Right cardiac atrium (tissue), 5 donors: ENCODE measurements at regions of chr1 and their contacts with region 1.

Region 1: DNA sequence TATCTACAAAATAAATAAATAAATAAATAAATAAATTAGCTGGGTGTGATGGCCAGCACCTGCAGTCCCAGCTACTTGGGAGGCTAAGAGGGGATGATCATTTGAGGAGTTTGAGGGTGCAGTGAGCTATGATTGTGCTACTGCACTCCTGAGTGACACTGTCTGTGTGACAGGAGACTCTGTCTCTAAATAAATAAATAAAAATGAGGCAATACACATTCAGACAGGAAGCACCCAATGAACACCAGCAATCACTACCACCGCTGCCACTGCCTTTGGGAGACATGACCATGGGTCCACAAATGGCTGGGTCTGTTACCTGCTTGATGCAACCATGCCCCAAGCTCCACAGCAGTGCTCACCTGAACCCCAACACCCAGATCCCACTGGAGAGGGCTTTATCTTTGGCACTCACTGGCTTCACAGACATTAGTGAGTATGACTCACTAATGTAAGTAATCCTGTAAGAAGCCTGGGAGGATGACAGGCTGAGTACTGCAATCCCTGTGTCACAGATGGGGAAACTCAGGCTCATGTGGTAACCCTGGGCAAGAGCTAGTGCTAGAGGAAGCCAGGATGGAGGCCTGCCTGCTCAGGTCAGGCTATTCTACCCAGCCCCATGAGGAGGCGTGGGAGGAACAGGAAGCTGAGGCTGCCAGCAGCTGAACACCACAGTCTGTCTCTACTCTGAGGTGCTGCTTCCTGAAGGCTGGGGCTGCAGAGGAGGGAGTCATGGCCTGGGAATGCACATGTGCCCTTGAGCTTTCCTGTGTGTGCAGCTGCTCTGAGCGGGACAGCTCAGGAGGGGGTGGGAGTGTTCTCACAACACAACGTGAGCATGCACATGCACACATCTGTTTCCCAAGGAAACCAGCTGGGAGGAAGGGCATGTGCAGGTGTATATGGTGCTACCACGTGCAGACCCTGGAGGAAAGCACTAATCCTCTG is 43.0 kb downstream of the SLC9A1 start:
- DNase-seq: peak; percentile 81 to 90 (median 81)
- ATAC-seq: peak; percentile 83 to 92
- H3K4me3 ChIP-seq: no peak overlapping the region
- H3K27ac ChIP-seq: no peak overlapping the region
- H3K4me1 ChIP-seq: peaks cover 13% of the 10 kb centered on the region
- H3K27me3 ChIP-seq: no peaks in the 10 kb centered on the region

Region 2: DNA sequence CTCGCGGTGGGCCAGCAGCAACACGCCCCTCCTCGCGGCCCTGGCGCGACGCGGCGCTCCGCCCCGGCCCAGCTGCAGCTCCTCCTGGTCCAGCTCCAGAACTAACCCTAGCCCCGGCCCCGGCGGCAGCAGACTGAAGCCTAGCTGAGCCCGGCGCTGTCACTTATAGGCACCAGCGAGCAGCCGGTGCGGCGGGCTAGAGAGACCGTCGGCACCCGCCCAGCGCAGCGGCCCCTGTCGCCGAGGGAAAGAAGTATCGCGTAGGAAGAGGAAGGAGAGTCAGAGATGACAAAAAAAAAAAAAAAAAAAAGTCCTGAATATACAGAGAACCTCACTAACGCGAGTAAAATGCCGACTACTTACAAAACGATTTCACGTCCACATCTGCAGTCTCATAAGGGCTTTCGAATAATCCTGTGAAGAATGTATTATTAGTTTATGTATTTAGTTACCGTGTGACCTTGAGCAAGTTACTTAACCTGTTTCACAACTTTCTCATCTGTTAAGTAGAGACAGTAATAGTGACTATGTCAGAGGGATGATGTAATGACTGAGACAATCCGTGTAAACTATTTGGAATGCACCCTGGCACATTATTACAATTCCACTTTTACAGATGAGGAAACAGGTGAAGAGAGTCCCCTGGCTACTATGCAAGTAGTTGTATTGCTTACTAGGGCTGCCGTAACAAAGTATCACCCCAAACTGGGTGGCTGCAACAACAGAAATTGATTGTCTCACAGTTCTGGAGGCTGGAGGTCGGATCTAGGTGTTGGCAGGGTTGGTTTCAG is 43.3 kb after region 1 on chr1 and contains the start of gene SLC9A1:
- intact Hi-C with region 1: loop called in 2 of 4 experiments (anchors 5 kb)
- DNase-seq: peak; percentile 95 to 98 (median 98)
- ATAC-seq: peak; percentile 91
- H3K4me3 ChIP-seq: peak within 1 kb of the TSS; percentile 97
- H3K27ac ChIP-seq: peak within 1 kb of the TSS; percentile 97
- H3K4me1 ChIP-seq: peaks cover 9% of the 10 kb centered on the region
- H3K27me3 ChIP-seq: no peaks in the 10 kb centered on the region
- total RNA-seq, gene SLC9A1: 22.8 to 39.3 (median 35.4) TPM

Region 3: DNA sequence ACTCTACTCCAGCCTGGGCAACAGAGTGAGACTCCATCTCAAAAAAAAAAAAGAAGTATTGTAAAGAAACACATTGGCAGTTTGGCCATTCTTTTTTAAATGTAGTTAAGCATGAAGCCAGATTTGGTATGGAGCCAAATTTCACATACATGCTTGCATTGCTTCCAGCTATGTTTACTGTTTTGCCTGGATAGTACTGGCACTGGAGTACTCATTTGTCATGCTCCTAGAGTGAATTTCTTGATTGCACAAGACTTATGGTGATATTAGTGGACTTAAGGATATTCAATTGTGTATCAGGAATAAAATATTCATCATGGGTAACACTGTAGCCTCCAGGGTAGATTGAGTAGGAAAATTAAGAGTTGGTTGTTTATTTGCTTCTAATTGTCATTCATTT is 67.5 kb after region 1 on chr1:
- intact Hi-C with region 1: no loop called
- DNase-seq: no peak
- ATAC-seq: no peak
- H3K4me3 ChIP-seq: no peak overlapping the region
- H3K27ac ChIP-seq: no peak overlapping the region
- H3K4me1 ChIP-seq: no peaks in the 10 kb centered on the region
- H3K27me3 ChIP-seq: no peaks in the 10 kb centered on the region

Region 4: DNA sequence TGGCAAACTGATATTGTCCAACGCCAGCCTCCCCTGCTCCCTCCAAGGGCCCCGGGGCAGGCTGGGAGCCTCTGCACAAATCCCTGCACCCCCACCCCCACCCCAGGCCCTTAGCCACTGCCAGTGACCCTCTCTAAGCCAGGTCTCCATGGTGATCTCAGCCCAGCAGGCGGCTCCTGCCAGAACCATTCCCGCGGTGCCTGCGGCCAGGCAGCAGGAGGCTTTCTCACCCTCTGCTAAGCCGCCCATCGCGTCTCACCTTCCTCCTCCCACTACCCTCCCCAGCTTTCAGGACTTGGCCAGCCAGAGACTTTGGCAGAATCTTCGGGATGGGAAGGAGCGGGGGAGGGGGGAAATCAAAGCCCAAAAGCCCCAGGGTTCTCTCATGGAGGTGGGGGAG is 424.9 kb after region 1 on chr1:
- intact Hi-C with region 1: no loop called
- DNase-seq: peak; percentile 77 to 93 (median 90)
- ATAC-seq: peak; percentile 79 to 90
- H3K4me3 ChIP-seq: no peak overlapping the region
- H3K27ac ChIP-seq: peak overlapping the region; percentile 86
- H3K4me1 ChIP-seq: peaks cover 13% of the 10 kb centered on the region
- H3K27me3 ChIP-seq: no peaks in the 10 kb centered on the region

Region 5: GRCh38 chr1:27616441-27616840 is 504.5 kb after region 1 on chr1:
- intact Hi-C with region 1: loop called in 1 of 4 experiments (anchors 10 kb)
- DNase-seq: no peak
- ATAC-seq: no peak
- H3K4me3 ChIP-seq: no peak overlapping the region
- H3K27ac ChIP-seq: no peak overlapping the region
- H3K4me1 ChIP-seq: peaks cover 2% of the 10 kb centered on the region
- H3K27me3 ChIP-seq: no peaks in the 10 kb centered on the region